Ascending aorta (tissue), 2 donors: ENCODE measurements at regions of chr11 and their contacts with region 1.

Region 1: GRCh38 chr11:125592305-125593112 is at the start of gene STT3A:
- DNase-seq: peak; percentile 99 to 100
- H3K4me3 ChIP-seq: peak within 1 kb of the TSS; percentile 82 to 99
- H3K27ac ChIP-seq: peak within 1 kb of the TSS; percentile 94 to 100
- H3K4me1 ChIP-seq: peaks cover 7 to 13% of the 10 kb centered on the region in 2 donors
- H3K27me3 ChIP-seq: no peaks in the 10 kb centered on the region
- CTCF ChIP-seq: no peak
- total RNA-seq, gene STT3A: 88.9 TPM

Region 2: GRCh38 chr11:124953753-124954589 is 638.5 kb before region 1 on chr11 and contains the start of gene CCDC15:
- intact Hi-C with region 1: loop called (anchors 5 kb)
- DNase-seq: peak; percentile 88 to 98
- H3K4me3 ChIP-seq: peak within 1 kb of the TSS; percentile 62 to 71
- H3K27ac ChIP-seq: peak within 1 kb of the TSS; percentile 68 to 78
- H3K4me1 ChIP-seq: peaks cover 0 to 8% of the 10 kb centered on the region in 2 donors
- H3K27me3 ChIP-seq: no peaks in the 10 kb centered on the region
- CTCF ChIP-seq: no peak
- total RNA-seq, gene CCDC15: not detected

Region 3: GRCh38 chr11:125164422-125165110 is 427.9 kb before region 1 on chr11 and contains the start of gene PKNOX2:
- intact Hi-C with region 1: loop called (anchors 10 kb)
- DNase-seq: peak in 1 of 2 donors; percentile 83
- H3K4me3 ChIP-seq: peak within 1 kb of the TSS; percentile 52 to 82
- H3K27ac ChIP-seq: peak within 1 kb of the TSS; percentile 80 to 91
- H3K4me1 ChIP-seq: peaks cover 8 to 26% of the 10 kb centered on the region in 2 donors
- H3K27me3 ChIP-seq: no peaks in the 10 kb centered on the region
- CTCF ChIP-seq: peak; percentile 40 to 85 (median 73)
- total RNA-seq, gene PKNOX2: 12.1 TPM

Region 4: DNA sequence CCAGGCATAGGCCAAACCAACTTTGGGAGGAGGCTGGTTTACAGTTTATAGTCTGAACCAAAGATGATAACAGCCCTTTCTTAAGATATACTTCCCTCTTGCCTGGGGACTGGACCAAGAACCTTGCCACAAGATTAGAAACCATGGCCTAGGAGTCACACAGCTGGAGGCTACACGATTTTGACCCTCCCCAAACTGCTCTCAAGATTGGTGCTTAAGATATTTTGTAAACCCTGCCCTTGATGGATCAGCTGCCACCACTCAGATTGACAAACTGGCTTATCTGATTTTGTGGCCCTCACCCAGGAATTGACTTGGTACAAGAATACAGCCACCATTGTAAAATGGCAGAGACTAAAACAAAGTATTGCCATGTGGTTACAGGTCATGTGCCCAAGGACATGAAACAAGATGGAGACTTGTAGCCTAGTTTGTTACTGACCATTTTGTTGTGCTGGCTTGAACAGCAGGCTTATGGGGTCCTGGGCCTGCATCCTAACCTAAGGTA is 40.6 kb before region 1 on chr11:
- intact Hi-C with region 1: no loop called
- DNase-seq: no peak
- H3K4me3 ChIP-seq: no peak overlapping the region
- H3K27ac ChIP-seq: no peak overlapping the region
- H3K4me1 ChIP-seq: no peaks in the 10 kb centered on the region
- H3K27me3 ChIP-seq: no peaks in the 10 kb centered on the region
- CTCF ChIP-seq: no peak

Region 5: DNA sequence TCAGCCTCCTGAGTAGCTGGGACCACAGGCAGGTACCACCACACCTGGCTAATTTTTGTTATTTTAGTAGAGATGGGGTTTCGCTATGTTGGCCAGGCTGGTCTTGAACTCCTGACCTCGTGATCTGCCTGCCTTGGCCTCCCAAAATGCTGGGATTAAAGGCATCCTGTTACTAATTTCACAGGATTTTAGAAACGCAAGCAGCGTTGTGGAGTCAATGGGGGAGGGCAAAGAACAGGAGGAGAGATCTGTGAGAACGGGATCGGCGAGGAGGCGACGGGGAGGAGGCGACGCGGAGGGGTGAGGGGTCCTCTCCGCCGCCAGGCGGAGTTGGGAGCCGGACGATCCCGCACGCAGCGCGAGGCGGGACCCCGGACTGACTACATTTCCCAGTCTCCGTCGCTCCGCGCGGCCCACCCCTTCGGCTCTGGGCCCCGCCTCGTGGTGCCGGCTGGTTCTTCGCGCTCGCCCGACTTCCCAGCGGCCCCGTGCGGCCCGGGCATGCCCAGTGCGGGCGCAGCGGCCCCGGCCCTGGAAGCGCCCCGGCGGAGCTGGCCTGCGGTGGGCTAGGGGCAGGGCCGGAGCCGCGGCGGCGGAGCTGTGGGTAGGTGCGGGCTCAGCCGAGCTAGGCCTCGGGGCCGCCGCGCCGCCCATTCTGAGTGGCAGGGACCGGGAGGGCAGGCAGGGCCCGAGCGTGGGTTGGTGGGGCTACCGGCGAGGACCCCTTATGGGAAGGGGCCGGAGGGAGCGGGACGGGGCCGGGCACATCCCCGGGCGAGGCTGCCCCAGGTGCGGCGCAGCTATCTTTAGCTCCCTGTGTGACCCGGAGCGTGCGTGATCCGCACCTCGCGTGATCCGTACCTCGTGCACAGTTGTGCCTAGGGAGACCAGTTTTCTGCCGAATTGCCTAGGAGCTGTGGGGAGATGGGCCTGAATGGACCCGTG is 23.3 kb before region 1 on chr11 and contains the start of gene EI24:
- intact Hi-C with region 1: loop called (anchors 1 kb)
- DNase-seq: peak; percentile 47 to 95
- H3K4me3 ChIP-seq: peak within 1 kb of the TSS; percentile 94 to 96
- H3K27ac ChIP-seq: peak within 1 kb of the TSS; percentile 83 to 84
- H3K4me1 ChIP-seq: peaks cover 5 to 16% of the 10 kb centered on the region in 2 donors
- H3K27me3 ChIP-seq: no peaks in the 10 kb centered on the region
- CTCF ChIP-seq: peak; percentile 60 to 74 (median 73)
- total RNA-seq, gene EI24: 111 TPM

Region 6: DNA sequence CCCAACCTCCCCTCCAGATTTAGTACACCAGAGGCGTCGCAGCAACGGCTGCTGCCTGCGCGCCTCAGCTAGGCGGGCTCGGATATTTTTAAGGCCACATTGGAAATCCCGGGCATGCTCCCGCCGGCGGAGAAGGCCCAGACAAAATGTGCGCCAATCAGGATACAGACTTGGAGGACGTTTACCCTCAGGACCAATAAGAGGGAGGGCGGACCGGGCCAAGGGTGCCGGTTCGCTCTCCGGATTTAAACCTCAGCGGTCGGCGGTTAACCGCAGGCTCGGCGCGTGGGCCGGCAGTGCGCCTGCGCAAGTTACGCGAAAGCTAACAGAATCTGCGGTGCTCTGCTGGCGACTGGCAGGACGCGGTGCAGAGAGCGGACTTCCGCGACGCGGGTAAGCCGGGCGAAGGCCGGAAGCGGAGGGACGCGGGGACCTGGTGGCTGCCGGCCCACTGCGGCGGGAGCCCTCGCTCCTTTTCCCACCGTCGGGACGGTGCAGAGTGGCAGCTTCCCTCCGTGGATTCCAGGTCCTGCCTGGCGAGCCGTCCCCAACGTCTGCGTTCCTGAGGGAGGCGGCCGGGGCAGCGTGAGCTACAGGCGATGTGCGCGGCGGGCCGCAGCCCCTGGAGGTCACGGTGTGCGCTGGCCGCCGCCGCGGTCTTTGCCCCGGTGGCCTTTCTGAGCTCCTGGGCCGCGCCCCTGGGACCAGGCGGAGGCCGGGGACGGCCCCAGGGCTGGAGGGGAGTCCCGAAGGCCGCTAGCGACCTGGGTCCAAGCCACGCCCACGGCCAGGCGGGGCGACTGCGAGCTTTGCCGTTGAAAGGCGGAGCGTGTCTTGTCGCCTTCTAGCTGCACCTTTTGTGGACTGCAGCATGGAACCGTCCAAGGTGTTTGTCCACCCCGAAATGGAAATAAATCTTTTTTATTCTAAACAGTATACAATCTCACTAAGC is 295.1 kb after region 1 on chr11 and contains the start of gene HYLS1:
- intact Hi-C with region 1: loop called (anchors 1 kb)
- DNase-seq: peak; percentile 81 to 97
- H3K4me3 ChIP-seq: peak within 1 kb of the TSS; percentile 71 to 90
- H3K27ac ChIP-seq: peak within 1 kb of the TSS; percentile 91 to 98
- H3K4me1 ChIP-seq: peaks cover 2% of the 10 kb centered on the region in 2 donors
- H3K27me3 ChIP-seq: no peaks in the 10 kb centered on the region
- CTCF ChIP-seq: peak in 2 of 3 experiments; percentile 4 to 34
- total RNA-seq, gene HYLS1: 6.5 TPM

Region 7: DNA sequence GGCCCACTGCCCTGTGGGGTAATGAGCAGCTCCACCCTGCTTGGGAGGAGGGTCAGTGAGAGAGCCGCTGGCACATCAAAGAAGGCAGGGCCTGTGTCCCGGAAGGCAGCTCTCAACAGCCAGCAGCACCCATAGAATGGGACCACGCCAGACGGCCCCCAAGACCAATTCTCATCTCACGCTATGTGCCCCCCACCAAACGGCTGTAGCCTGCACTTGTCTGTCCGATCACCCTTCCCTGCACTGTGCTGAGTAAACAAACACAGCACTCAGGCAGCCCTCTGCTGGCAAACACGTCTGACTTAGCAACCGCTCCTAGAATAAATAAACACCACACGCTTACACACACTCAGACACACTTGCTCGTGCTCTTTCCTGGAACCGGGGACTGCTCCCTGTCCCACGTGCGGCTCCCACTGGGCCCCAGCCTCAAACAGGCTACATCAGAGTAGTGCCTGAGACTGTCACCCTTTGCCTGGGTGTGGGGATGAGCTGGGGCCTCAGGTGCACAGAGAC is 523.4 kb after region 1 on chr11:
- intact Hi-C with region 1: loop called (anchors 10 kb)
- DNase-seq: peak; percentile 59 to 85
- H3K4me3 ChIP-seq: no peak overlapping the region
- H3K27ac ChIP-seq: peak overlapping the region; percentile 74 to 76
- H3K4me1 ChIP-seq: peaks cover 20 to 44% of the 10 kb centered on the region in 2 donors
- H3K27me3 ChIP-seq: no peaks in the 10 kb centered on the region
- CTCF ChIP-seq: peak in 1 of 3 experiments; percentile 22

Region 8: GRCh38 chr11:126355324-126355925 is 762.9 kb after region 1 on chr11 and contains the start of gene ST3GAL4:
- intact Hi-C with region 1: loop called (anchors 1 kb)
- DNase-seq: peak in 1 of 2 donors; percentile 83
- H3K4me3 ChIP-seq: peak within 1 kb of the TSS; percentile 84 to 88
- H3K27ac ChIP-seq: peak within 1 kb of the TSS; percentile 80 to 86
- H3K4me1 ChIP-seq: peaks cover 22 to 53% of the 10 kb centered on the region in 2 donors
- H3K27me3 ChIP-seq: no peaks in the 10 kb centered on the region
- CTCF ChIP-seq: no peak
- total RNA-seq, gene ST3GAL4: 61.4 TPM